Activated B cell treated with CpG ODN at 0.5 μM for 24 hours (primary cell): ENCODE measurements at regions of chr6 and their contacts with region 1.

Region 1: DNA sequence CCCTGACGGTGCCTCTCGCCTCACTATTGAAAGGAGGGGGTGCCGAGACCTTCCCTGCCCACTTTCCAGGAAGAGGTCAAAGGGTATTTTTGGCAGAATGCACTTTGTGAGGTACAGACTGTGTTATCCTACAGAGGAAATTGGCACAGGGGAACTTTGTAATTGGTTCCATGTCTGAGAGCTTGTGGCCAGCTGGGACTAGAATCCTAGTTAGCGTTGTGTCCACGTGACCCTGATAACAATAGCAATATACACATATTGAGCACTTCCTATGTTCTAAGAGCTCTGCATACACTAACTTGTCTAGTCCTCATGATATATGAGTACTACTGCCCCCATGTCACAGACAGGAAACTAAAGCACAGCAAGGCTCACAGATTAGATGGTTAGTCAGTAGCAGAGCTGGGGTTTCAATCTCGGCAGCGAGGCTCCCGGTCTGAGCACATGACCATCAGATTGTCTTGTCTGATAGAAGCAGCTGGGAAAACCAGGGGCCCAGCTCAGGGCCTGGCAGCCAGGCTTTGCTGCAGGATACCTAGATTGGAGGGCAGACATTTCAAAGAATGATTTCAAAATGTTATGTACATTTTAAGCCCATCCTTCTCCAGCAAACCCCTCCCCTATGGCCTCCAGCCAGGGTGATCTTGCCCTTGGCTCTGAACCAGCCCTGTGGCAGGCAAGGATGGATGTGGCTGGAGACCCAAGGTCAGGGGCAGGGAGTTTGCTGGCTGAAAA is 1.4 kb downstream of the MAPK13 start:
- DNase-seq: no peak
- ATAC-seq: peak; percentile 51
- H3K4me3 Mint-ChIP-seq: peak overlapping the region; percentile 86
- H3K27ac Mint-ChIP-seq: peak overlapping the region; percentile 69
- H3K4me1 Mint-ChIP-seq: peaks cover 53% of the 10 kb centered on the region
- H3K27me3 Mint-ChIP-seq: no peaks in the 10 kb centered on the region
- CTCF ChIP-seq: no peak

Region 2: DNA sequence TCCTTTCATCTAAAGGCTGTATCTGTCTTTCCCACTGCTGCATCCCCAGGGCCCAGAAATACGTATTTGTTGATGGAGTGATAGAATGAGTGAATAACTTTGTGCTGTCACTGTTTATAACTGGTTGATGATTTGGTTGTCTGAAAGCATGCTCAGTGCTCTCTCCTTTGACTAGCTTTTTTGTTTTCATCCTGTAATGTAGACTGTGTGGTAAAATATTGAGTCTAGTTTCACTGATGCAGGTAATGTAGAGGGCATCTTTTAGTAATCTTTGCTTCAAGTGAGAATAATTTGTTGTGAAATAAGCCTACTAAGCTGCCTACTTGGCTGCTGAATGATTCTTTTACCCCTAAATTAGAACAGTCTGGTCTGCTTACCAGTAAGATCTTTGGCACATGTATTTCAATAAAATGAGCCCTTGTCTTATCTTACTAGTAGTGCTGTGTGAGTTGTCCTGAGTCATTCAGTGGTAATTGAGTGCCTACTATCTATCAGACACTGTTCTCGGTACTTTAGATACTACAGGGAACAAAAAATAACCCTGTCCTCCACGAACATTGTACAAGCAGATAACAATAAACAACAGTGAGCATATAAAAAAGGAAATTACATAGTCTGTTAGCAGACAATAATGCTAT is 64.2 kb before region 1 on chr6:
- CTCF ChIA-PET with region 1: no interaction called
- POLR2A ChIA-PET with region 1: no interaction called
- intact Hi-C with region 1: no loop called
- DNase-seq: no peak
- ATAC-seq: no peak
- H3K4me3 Mint-ChIP-seq: no peak overlapping the region
- H3K27ac Mint-ChIP-seq: no peak overlapping the region
- H3K4me1 Mint-ChIP-seq: peaks cover 29% of the 10 kb centered on the region
- H3K27me3 Mint-ChIP-seq: no peaks in the 10 kb centered on the region
- CTCF ChIP-seq: no peak

Region 3: GRCh38 chr6:36113703-36114102 is 18.0 kb before region 1 on chr6:
- CTCF ChIA-PET with region 1: interaction called, 3 read pairs
- POLR2A ChIA-PET with region 1: interaction called, 13 read pairs
- intact Hi-C with region 1: loop called (anchors 2 kb)
- DNase-seq: no peak
- ATAC-seq: no peak
- H3K4me3 Mint-ChIP-seq: no peak overlapping the region
- H3K27ac Mint-ChIP-seq: peak overlapping the region; percentile 81
- H3K4me1 Mint-ChIP-seq: peaks cover 96% of the 10 kb centered on the region
- H3K27me3 Mint-ChIP-seq: no peaks in the 10 kb centered on the region
- CTCF ChIP-seq: no peak